ENCODE measurements at regions of chr20 and their contacts with region 1.

Region 1: GRCh38 chr20:31822421-31823330 is 3.5 kb downstream of the MYLK2 start:
- DNase-seq: peak; percentile 49
- ATAC-seq: peak; percentile 87
- H3K4me3 ChIP-seq: peak overlapping the region in 1 of 3 experiments; percentile 37; a peak in 1 of 6 replicates
- H3K27ac ChIP-seq: no peak overlapping the region
- H3K4me1 ChIP-seq: 0 out of 2 replicates have a peak, but pooled peaks cover 7% of the 10 kb centered on the region
- H3K27me3 ChIP-seq: peaks cover 12 to 62% of the 10 kb centered on the region in 2 experiments
- CTCF ChIP-seq: peak; percentile 100
- EP300 ChIP-seq: no peak; a peak in 1 of 4 replicates
- POLR2A ChIP-seq: no peak
- RAD21 ChIP-seq: peak; percentile 99

Region 2: GRCh38 chr20:31833130-31833930 is 10.7 kb after region 1 on chr20:
- CTCF ChIA-PET with region 1: interaction called, 7 read pairs
- POLR2A ChIA-PET with region 1: no interaction called
- in situ Hi-C with region 1: no loop called
- intact Hi-C with region 1: loop called (anchors 1 kb)
- DNase-seq: peak; percentile 74
- ATAC-seq: peak; percentile 83
- H3K4me3 ChIP-seq: no peak overlapping the region
- H3K27ac ChIP-seq: no peak overlapping the region
- H3K4me1 ChIP-seq: peaks cover 31% of the 10 kb centered on the region
- H3K27me3 ChIP-seq: peaks cover 2 to 6% of the 10 kb centered on the region in 2 experiments; a peak in 3 of 5 replicates
- CTCF ChIP-seq: peak; percentile 87
- EP300 ChIP-seq: no peak
- POLR2A ChIP-seq: no peak
- RAD21 ChIP-seq: peak; percentile 54; the same call in 1 of the 2 replicates

Region 3: DNA sequence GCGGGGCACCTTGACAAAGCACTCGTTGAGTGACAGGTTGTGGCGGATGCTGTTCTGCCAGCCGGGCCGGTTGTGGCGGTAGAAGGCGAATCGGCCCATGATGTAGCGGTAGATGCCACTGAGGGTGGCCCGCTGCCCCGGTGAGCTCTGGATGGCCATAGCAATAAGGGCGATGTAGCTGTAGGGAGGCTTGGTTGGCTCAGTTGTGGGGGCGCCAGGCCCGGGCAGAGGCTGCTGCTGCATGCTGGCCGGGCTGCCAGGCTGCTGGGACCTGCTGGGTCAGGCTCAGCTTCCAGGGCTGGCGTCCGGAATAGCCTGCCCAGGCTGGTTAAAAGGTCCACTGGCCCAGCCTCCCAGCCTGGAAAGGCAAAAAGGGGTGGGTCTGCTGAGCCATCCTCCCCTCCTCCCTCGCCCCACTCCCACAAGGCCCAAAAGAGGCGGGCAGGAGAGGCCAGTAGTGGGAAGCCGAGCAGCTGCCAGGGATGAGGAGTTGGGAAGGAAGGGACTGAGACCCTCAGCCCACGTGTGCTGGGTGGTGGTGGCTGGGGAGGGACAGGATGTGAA is 22.7 kb after region 1 on chr20 and contains the start of gene FOXS1:
- CTCF ChIA-PET with region 1: interaction called, 70 read pairs
- POLR2A ChIA-PET with region 1: no interaction called
- in situ Hi-C with region 1: no loop called
- intact Hi-C with region 1: loop called (anchors 1 kb)
- DNase-seq: no peak
- ATAC-seq: no peak; the same call in 2 of the 3 replicates
- H3K4me3 ChIP-seq: no peak within 1 kb of the TSS
- H3K27ac ChIP-seq: no peak within 1 kb of the TSS
- H3K4me1 ChIP-seq: peaks cover 8% of the 10 kb centered on the region; the same call in 1 of the 2 replicates
- H3K27me3 ChIP-seq: peaks cover 22 to 79% of the 10 kb centered on the region in 2 experiments
- CTCF ChIP-seq: no peak
- EP300 ChIP-seq: no peak
- POLR2A ChIP-seq: no peak
- RAD21 ChIP-seq: no peak
- total RNA-seq, gene FOXS1: not detected in 2 replicates

Region 4: DNA sequence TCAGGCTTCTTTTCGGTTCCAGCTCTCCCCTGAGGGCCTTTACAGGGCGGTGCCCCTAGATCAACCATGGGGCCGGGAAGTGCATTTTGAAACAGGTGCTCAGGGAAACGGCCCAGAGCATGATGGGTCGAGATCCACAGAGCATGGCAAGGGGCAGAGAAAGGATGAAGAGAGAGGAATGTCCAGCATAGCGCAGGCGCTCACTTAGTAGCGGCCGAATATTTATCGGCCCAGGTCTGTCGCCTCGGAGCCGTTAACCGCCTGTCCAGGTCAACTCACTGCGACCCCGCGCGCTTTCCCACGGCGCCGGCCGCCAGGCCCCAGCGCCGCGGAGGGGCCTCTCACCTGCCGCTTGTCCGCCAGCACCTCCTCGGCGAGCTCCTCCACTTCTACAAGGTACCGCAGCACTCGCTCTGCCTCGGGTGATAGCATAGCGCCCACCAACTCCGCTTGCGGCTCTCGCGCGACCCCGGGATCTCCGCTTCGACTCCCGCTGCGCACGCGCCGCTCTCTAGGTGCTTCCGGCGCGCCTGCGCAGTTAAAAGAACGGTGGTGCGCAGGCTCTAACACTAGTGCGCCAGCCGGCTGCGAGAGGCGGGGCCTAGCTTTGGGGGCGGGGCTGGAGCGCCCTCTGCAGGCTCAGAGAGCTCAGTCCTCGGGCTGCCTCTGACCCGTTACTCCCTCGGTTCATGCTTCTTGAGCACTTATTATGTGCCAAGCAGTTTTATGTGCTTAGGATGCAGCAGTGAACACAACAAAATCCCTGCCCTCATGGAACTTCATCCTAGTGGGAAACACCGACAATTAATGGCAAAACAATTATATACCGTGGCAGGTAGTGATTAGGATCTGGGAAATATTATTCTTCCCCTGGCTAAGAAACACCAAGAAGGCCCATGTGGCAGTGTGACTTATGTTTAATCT is 129.1 kb after region 1 on chr20 and contains the start of gene PDRG1:
- CTCF ChIA-PET with region 1: interaction called, 10 read pairs
- POLR2A ChIA-PET with region 1: interaction called, 4 read pairs
- in situ Hi-C with region 1: no loop called
- intact Hi-C with region 1: loop called (anchors 10 kb)
- DNase-seq: peak; percentile 98
- ATAC-seq: peak; percentile 96
- H3K4me3 ChIP-seq: peak within 1 kb of the TSS; percentile 96 to 98 (median 98)
- H3K27ac ChIP-seq: peak within 1 kb of the TSS; percentile 73
- H3K4me1 ChIP-seq: peaks cover 15% of the 10 kb centered on the region
- H3K27me3 ChIP-seq: no peaks in the 10 kb centered on the region; a peak in 1 of 5 replicates
- CTCF ChIP-seq: peak; percentile 100
- EP300 ChIP-seq: 0 out of 4 replicates have a peak, but pooled peaks have one; percentile 3 to 4
- POLR2A ChIP-seq: peak; percentile 96 to 97
- RAD21 ChIP-seq: peak; percentile 97
- total RNA-seq, gene PDRG1: 16.6 and 22.1 TPM in 2 replicates

Region 5: DNA sequence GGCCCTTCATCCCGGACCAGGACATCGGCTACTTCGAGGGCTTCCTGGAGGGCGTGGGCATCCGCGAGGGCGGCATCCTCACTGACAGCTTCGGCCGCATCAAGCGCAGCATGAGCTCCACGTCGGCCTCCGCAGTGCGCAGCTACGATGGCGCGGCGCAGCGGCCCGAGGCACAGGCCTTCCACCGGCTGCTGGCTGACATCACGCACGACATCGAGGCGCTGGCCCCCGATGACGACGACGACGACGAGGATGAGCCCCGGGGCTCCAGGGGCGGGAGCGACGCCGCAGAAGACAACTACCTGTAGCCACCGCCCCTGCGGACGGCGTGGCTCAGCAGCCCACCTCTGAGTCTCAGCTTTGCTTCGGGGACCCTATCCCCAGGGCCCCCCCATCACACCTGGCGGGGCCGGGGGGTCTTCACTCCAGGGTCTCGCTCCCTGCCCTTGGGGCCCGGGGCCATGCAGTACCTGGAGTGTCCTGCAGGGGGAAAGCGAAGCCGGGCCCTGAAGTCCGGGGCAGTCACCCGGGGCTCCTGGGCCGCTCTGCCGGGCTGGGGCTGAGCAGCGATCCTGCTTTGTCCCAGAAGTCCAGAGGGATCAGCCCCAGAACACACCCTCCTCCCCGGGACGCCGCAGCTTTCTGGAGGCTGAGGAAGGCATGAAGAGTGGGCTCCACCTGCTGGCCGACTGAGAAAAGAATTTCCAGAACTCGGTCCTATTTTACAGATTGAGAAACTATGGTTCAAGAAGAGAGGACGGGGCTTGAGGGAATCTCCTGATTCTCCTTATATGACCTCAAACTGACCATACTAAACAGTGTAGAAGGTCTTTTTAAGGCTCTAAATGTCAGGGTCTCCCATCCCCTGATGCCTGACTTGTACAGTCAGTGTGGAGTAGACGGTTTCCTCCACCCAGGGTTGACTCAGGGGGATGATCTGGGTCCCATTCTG is 208.6 kb after region 1 on chr20:
- CTCF ChIA-PET with region 1: interaction called, 26 read pairs
- POLR2A ChIA-PET with region 1: no interaction called
- in situ Hi-C with region 1: loop called (anchors 5 kb)
- intact Hi-C with region 1: loop called (anchors 1 kb)
- DNase-seq: peak; percentile 94
- ATAC-seq: peak; percentile 97
- H3K4me3 ChIP-seq: peak overlapping the region in 1 of 3 experiments; percentile 24; a peak in 1 of 6 replicates
- H3K27ac ChIP-seq: no peak overlapping the region
- H3K4me1 ChIP-seq: peaks cover 23% of the 10 kb centered on the region
- H3K27me3 ChIP-seq: peaks cover 0 to 36% of the 10 kb centered on the region in 2 experiments; a peak in 3 of 5 replicates
- CTCF ChIP-seq: peak; percentile 93
- EP300 ChIP-seq: no peak
- POLR2A ChIP-seq: no peak
- RAD21 ChIP-seq: peak; percentile 97

Region 6: GRCh38 chr20:32091888-32092346 is 269.2 kb after region 1 on chr20:
- CTCF ChIA-PET with region 1: interaction called, 7 read pairs
- POLR2A ChIA-PET with region 1: no interaction called
- in situ Hi-C with region 1: loop called (anchors 10 kb)
- intact Hi-C with region 1: loop called (anchors 1 kb)
- DNase-seq: peak; percentile 82
- ATAC-seq: peak; percentile 88
- H3K4me3 ChIP-seq: no peak overlapping the region
- H3K27ac ChIP-seq: no peak overlapping the region
- H3K4me1 ChIP-seq: 0 out of 2 replicates have a peak, but pooled peaks cover 4% of the 10 kb centered on the region
- H3K27me3 ChIP-seq: peaks cover 7 to 32% of the 10 kb centered on the region in 2 experiments; a peak in 4 of 5 replicates
- CTCF ChIP-seq: peak; percentile 92
- EP300 ChIP-seq: no peak
- POLR2A ChIP-seq: no peak
- RAD21 ChIP-seq: peak; percentile 57; the same call in 1 of the 2 replicates

Measured in HepG2 (cell line).